Ascending aorta (tissue), 2 donors: ENCODE measurements at regions of chr3 and their contacts with region 1.

Region 1: DNA sequence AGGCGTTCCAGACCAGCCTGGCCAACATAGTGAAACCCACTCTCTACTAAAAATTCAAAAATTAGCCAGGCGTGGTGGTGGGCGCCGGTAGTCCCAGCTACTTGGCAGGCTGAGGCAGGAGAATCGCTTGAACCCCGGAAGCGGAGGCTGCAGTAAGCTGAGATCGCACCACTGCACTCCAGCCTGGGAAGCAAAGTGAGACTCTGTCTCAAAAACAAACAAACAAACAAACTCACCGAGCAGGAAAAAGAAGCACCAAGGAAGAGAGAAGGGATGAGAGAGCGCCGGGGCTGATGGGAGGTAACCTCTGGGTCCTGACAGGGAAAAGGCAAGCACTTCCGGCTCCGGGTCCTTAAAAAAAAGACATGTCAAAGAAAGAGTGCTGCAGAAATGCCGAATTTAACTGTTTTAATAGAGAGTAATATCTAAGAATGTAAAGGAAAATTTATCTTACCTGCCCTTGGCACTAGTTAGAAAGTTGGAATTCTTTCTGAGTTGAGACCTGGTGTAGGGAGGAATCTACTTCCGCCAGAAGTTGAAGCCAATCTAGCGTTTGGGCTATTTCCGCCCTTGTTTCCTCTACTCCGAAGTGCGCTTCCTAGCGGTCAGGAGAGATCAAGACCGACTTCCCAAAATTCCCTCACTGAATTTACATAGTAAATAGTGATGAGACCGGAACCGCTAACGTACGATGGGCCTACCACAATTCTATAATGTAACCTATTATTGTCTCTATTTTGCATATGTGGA is 29.1 kb downstream of the EFCAB12 start:
- DNase-seq: peak; percentile 16 to 91
- H3K4me3 ChIP-seq: peak overlapping the region; percentile 52 to 78
- H3K27ac ChIP-seq: peak overlapping the region; percentile 77 to 88
- H3K4me1 ChIP-seq: peaks cover 0 to 8% of the 10 kb centered on the region in 2 donors
- H3K27me3 ChIP-seq: no peaks in the 10 kb centered on the region
- CTCF ChIP-seq: peak; percentile 74 to 88 (median 82)

Region 2: GRCh38 chr3:128879125-128879969 is 520.0 kb before region 1 on chr3 and contains the start of gene ACAD9:
- intact Hi-C with region 1: loop called (anchors 2 kb)
- DNase-seq: peak; percentile 94 to 98
- H3K4me3 ChIP-seq: peak within 1 kb of the TSS; percentile 71 to 86
- H3K27ac ChIP-seq: peak within 1 kb of the TSS; percentile 91 to 95
- H3K4me1 ChIP-seq: peaks cover 17% of the 10 kb centered on the region in 2 donors
- H3K27me3 ChIP-seq: no peaks in the 10 kb centered on the region
- CTCF ChIP-seq: no peak
- total RNA-seq, gene ACAD9: 23.4 TPM

Region 3: DNA sequence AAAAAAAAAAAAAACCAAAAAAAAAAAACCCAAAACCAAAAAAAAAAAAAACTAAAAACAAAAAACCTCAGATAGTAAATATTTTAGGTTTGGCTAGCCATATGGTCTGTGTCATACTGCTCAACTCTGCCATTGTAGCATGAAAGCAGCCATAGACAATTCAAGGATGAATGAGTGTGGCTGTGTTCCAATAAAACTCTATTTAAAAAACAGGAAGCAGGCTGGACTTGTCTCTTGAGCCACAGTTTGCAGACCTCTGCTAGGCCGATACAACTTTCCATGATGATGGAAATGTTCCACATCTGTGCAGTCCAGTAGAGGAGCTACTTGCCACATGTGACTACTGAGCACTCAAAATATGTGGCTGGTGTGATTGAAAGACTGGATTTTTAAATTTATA is 18.0 kb after region 1 on chr3:
- intact Hi-C with region 1: no loop called
- DNase-seq: peak in 1 of 2 donors; percentile 55
- H3K4me3 ChIP-seq: no peak overlapping the region
- H3K27ac ChIP-seq: no peak overlapping the region
- H3K4me1 ChIP-seq: no peaks in the 10 kb centered on the region
- H3K27me3 ChIP-seq: no peaks in the 10 kb centered on the region
- CTCF ChIP-seq: no peak

Region 4: GRCh38 chr3:129428376-129429079 is 29.2 kb after region 1 on chr3 and contains the start of gene EFCAB12:
- intact Hi-C with region 1: loop called (anchors 1 kb)
- DNase-seq: peak; percentile 83 to 97
- H3K4me3 ChIP-seq: peak within 1 kb of the TSS; percentile 55 to 61
- H3K27ac ChIP-seq: peak within 1 kb of the TSS; percentile 49 to 52
- H3K4me1 ChIP-seq: peaks cover 0 to 6% of the 10 kb centered on the region in 2 donors
- H3K27me3 ChIP-seq: no peaks in the 10 kb centered on the region
- CTCF ChIP-seq: no peak
- total RNA-seq, gene EFCAB12: not detected